ENCODE measurements at regions of chr9 and their contacts with region 1.

Region 1: GRCh38 chr9:78574354-78575045 is 277.6 kb downstream of the PSAT1 start:
- DNase-seq: no peak
- ATAC-seq: no peak
- H3K4me3 ChIP-seq: no peak overlapping the region
- H3K27ac ChIP-seq: no peak overlapping the region
- H3K4me1 ChIP-seq: peaks cover 4 to 9% of the 10 kb centered on the region in 2 donors
- H3K27me3 ChIP-seq: no peaks in the 10 kb centered on the region
- CTCF ChIP-seq: no peak
- POLR2A ChIP-seq: no peak

Region 2: DNA sequence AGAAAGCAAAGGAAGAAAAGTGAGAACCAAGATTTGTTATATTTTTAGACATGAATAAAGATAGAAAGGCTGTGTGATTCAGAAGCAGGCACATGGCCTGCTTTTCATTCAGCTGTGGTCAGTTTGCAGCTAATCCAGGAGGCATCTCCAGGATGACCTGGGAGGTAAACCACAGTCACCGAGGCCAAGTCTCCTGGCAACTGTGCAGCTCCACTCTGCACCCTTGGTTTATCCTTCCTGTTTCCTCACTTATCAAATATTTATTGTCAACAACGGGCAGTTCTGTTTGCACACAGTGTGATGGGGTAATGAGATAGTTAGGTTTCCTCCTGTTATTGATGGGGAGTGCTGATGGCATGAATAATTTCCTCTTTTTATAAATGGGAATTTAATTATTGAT is 34.6 kb before region 1 on chr9:
- in situ Hi-C with region 1: no loop called
- intact Hi-C with region 1: loop called (anchors 5 kb)
- DNase-seq: peak; percentile 63 to 79
- ATAC-seq: peak; percentile 98 to 99
- H3K4me3 ChIP-seq: no peak overlapping the region
- H3K27ac ChIP-seq: peak overlapping the region in 3 of 4 donors; percentile 64 to 76 (median 65)
- H3K4me1 ChIP-seq: peaks cover 7 to 9% of the 10 kb centered on the region in 2 donors
- H3K27me3 ChIP-seq: no peaks in the 10 kb centered on the region
- CTCF ChIP-seq: no peak
- POLR2A ChIP-seq: no peak

Region 3: DNA sequence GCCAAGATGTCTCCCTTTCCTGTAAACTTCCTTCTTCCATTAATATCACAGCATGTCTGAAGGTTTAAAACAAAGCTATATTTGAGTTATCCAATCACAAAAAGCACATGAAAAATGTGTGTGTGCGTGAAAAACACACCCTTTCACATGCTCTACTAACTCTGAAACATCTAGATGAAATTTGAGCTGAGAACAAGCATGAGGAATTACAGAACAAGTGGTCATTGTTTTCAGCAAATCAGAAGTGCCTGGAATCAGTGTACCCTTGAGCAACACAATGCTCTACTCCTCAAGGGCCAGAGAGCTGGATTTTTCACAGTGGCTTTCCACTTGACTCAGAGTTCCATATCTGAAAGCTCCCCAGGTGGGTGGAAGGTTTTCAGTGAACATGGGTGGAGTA is 21.7 kb before region 1 on chr9:
- in situ Hi-C with region 1: no loop called
- intact Hi-C with region 1: no loop called
- DNase-seq: no peak
- ATAC-seq: no peak
- H3K4me3 ChIP-seq: no peak overlapping the region
- H3K27ac ChIP-seq: no peak overlapping the region
- H3K4me1 ChIP-seq: peaks cover 0 to 7% of the 10 kb centered on the region in 2 donors
- H3K27me3 ChIP-seq: no peaks in the 10 kb centered on the region
- CTCF ChIP-seq: no peak
- POLR2A ChIP-seq: no peak

Region 4: GRCh38 chr9:78622126-78622525 is 47.6 kb after region 1 on chr9:
- in situ Hi-C with region 1: no loop called
- intact Hi-C with region 1: no loop called
- DNase-seq: no peak
- ATAC-seq: no peak
- H3K4me3 ChIP-seq: no peak overlapping the region
- H3K27ac ChIP-seq: no peak overlapping the region
- H3K4me1 ChIP-seq: no peaks in the 10 kb centered on the region
- H3K27me3 ChIP-seq: no peaks in the 10 kb centered on the region
- CTCF ChIP-seq: no peak
- POLR2A ChIP-seq: no peak

Region 5: DNA sequence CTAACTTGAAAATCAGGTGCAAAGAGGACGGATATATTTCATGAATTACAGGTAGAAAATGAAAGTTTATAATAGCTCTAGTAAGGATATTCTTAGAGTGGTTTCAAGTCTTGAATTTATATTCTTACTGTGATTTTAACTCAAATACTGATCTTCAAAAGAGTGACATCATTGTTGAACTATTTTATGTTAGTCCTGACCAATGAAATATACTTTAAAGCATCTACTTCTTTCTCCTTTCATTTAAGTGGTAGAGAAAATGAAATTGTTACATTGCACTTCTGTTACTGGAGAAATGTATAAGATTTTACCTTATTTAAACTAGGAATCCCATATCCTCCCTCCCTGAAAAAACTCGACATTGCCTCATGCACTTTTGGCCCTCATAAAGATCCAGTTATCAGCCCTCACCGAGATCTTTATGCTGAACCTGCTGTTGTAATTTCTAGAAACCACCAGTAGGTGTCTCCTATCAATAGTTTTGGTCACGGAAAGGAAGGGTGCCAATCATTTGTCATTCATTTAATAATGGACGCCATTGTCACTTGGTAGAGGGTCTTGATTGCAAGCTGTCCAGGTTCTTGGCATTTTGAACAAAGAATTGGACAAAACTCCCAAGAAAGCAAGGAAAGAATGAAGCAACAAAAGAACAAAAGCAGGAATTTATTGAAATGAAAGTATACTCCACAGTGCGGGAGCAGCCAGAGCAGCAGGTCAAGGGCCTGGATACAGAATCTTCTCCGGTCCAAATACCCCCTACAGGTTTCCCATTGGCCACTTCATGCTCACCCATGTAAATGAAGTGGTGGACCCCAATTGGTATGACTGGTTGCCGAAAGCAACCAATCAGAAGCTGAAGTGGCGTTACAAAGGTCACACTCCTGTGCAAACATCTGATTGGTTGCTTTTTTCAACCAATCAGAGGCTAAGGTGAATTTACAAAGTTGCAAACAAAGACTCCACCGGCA is 246.6 kb after region 1 on chr9:
- in situ Hi-C with region 1: no loop called
- intact Hi-C with region 1: no loop called
- DNase-seq: no peak
- ATAC-seq: no peak
- H3K4me3 ChIP-seq: peak overlapping the region in 1 of 4 donors; percentile 8
- H3K27ac ChIP-seq: no peak overlapping the region
- H3K4me1 ChIP-seq: no peaks in the 10 kb centered on the region
- H3K27me3 ChIP-seq: no peaks in the 10 kb centered on the region
- CTCF ChIP-seq: peak in 3 of 5 experiments; percentile 28 to 50 (median 40)
- POLR2A ChIP-seq: no peak